Tibial artery (tissue), 4 donors: ENCODE measurements at regions of chr20 and their contacts with region 1.

Region 1: GRCh38 chr20:36135821-36136220 is 18.7 kb upstream of the EPB41L1 start:
- DNase-seq: no peak
- H3K4me3 ChIP-seq: no peak overlapping the region
- H3K27ac ChIP-seq: no peak overlapping the region
- H3K4me1 ChIP-seq: no peaks in the 10 kb centered on the region
- H3K27me3 ChIP-seq: no peaks in the 10 kb centered on the region
- CTCF ChIP-seq: no peak

Region 2: DNA sequence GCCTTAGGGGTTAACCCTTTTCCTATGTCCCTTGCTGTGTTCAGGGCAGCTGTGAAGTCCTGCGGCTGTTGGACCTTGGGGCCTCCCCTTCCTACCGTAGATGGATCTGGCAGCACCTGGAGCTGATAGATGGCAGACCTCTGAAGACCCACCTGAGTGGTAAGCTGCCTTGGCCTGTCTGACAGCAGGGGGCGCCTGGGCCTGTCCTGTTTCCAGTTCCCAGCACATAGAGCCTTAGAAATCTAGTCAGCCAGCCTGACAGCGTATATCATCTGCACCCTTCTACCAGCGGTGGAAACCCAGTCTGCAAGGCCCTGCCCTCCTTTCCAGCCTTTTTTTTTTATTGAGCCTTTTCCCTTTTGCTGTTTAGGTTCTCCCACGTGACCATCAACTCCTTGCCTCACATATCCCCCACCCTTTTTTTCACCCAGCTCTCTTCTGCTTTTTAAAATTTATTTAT is 140.8 kb before region 1 on chr20:
- intact Hi-C with region 1: loop called (anchors 2 kb)
- DNase-seq: peak; percentile 79 to 83
- H3K4me3 ChIP-seq: no peak overlapping the region
- H3K27ac ChIP-seq: no peak overlapping the region
- H3K4me1 ChIP-seq: peaks cover 0 to 5% (median 2%) of the 10 kb centered on the region in 4 donors
- H3K27me3 ChIP-seq: no peaks in the 10 kb centered on the region
- CTCF ChIP-seq: peak; percentile 86 to 87